Transverse colon (tissue), 4 donors: ENCODE measurements at regions of chr2 and their contacts with region 1.

Region 1: DNA sequence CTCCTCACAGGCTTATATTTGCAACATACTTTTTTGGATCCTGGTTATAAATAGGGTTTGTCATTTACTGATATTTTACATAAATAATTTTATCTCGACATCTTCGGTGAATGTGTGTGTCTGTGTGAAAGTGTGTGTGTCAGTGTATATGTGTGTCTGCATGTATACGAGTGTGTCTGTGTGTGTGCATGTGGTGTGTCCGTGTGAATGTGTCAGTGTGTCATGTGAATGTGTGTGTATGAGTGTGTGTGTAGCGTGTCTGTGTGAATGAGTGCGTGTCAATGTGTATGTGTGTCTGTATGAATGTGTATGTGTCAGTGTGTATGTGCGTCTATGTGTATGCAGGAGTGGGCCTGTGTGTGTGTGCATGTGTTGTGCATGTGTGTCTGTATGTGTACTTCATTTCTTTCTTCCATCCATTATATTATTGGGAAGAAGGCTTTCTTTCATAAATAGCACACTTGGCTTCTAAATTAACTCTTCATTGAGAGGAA is 161.6 kb downstream of the ST6GAL2 start:
- DNase-seq: no peak
- H3K4me3 ChIP-seq: no peak overlapping the region
- H3K27ac ChIP-seq: no peak overlapping the region
- H3K4me1 ChIP-seq: peaks cover 0 to 4% (median 0%) of the 10 kb centered on the region in 4 donors
- H3K27me3 ChIP-seq: no peaks in the 10 kb centered on the region
- CTCF ChIP-seq: no peak
- EP300 ChIP-seq: no peak
- POLR2A ChIP-seq: no peak

Region 2: DNA sequence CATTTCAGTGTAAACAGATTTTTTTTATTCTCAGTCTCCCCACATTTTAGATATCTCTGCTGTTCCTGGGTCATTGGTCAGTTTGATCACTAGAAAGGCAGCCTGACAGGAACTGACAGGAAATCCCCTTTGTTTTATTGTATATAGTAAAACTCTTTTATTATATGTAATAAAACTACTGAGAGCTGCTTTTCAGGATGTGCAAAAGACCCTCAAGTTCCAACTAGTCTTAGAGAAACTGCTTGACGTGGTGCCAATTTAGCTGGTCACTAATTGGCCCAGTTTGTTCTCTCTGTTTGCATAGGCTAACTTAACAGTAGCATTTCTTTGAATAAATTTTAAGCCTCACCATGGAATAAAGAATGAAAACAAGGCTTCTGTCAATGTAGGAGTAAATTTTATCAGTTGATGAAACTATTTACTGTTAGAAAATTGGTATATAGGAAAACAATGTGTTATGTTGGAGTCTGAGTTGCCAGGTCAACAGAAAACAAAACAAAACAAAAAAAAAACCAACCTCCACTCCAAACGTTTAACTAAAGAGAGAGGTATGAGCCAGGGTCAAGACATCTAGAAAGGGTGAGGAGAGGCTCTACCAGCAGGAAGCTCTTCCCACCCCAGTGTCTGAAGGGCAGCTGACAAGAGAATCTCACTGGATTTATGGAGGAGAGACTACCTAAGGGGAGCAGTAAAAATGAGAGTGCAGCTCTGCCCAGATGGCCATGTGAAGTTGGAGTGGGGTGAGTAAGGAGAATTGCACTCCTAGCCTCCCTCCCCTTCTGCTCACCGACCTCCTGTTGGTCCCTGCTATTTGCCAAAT is 22.9 kb before region 1 on chr2:
- in situ Hi-C with region 1: no loop called
- intact Hi-C with region 1: loop called (anchors 1 kb)
- DNase-seq: peak; percentile 60
- H3K4me3 ChIP-seq: no peak overlapping the region
- H3K27ac ChIP-seq: peak overlapping the region in 2 of 4 donors; percentile 28 to 32
- H3K4me1 ChIP-seq: peaks cover 4 to 35% (median 21%) of the 10 kb centered on the region in 4 donors
- H3K27me3 ChIP-seq: no peaks in the 10 kb centered on the region
- CTCF ChIP-seq: no peak
- EP300 ChIP-seq: no peak
- POLR2A ChIP-seq: no peak